Tibial artery (tissue), 4 donors: ENCODE measurements at regions of chr2 and their contacts with region 1.

Region 1: DNA sequence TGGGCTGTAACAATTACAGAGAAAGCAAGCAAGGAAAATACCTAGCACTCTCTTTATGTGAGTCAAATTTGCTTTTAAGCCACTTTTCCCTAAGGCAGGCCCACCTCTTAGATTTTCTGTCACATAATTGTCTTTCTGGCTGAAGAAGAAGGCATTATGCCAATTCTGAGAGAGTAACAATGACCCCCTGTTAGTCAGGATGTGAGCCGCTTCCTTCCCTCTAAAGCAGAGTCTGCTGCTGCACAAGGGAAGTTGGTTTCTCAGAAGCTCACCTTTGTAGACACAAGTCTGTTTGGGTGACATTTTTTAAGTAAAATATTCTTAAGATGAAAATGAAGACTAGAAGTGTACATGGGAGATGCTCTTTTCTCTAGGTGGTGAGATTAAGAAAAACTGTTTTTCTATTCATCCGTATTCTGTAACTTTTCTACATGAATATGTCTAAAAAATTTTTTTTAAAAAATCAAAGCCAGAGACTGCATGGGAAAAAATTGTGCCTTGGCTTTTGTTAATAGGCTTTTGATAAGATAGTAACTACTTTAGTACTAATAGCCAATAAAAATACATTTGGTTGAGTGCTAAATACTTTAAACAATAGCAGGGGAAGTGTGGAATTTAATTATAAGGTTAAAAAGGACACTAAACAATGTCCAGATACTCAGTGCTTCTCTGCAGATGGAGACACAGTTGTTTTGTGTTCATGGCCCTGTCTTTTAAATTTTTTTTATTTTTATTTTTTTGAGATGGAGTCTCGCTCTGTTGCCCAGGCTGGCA is 33.4 kb upstream of the VPS54 start:
- DNase-seq: no peak
- H3K4me3 ChIP-seq: no peak overlapping the region
- H3K27ac ChIP-seq: no peak overlapping the region
- H3K4me1 ChIP-seq: peaks cover 0 to 3% (median 2%) of the 10 kb centered on the region in 4 donors
- H3K27me3 ChIP-seq: no peaks in the 10 kb centered on the region
- CTCF ChIP-seq: no peak

Region 2: DNA sequence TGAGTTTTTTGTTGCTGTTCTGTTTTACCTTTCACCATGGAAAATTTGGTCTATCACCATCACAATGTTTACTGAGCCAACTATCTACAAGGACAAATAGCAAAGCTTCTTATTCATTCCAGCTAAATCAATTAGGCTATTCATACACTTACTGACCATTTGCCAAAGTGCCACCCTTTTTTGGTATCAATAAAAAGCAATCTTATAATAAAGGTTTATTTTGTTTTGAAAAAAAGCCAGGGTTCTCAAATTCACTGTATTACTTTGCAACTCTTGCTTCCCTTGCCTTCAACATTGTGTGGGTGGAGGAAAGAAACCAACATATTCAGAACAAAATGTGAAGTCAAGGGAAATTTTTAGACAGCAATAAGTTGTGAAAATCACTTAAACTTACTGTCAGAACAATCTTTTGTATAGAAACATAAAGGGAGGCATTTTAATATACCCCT is 76.3 kb after region 1 on chr2:
- intact Hi-C with region 1: no loop called
- DNase-seq: no peak
- H3K4me3 ChIP-seq: no peak overlapping the region
- H3K27ac ChIP-seq: no peak overlapping the region
- H3K4me1 ChIP-seq: peaks cover 0 to 55% (median 8%) of the 10 kb centered on the region in 4 donors
- H3K27me3 ChIP-seq: no peaks in the 10 kb centered on the region
- CTCF ChIP-seq: no peak

Region 3: GRCh38 chr2:64311948-64312621 is 259.4 kb after region 1 on chr2:
- intact Hi-C with region 1: loop called (anchors 5 kb)
- DNase-seq: peak; percentile 82 to 90
- H3K4me3 ChIP-seq: peak overlapping the region; percentile 23 to 29
- H3K27ac ChIP-seq: peak overlapping the region; percentile 70 to 74
- H3K4me1 ChIP-seq: peaks cover 0 to 24% (median 20%) of the 10 kb centered on the region in 4 donors
- H3K27me3 ChIP-seq: no peaks in the 10 kb centered on the region
- CTCF ChIP-seq: peak; percentile 41 to 54

Region 4: DNA sequence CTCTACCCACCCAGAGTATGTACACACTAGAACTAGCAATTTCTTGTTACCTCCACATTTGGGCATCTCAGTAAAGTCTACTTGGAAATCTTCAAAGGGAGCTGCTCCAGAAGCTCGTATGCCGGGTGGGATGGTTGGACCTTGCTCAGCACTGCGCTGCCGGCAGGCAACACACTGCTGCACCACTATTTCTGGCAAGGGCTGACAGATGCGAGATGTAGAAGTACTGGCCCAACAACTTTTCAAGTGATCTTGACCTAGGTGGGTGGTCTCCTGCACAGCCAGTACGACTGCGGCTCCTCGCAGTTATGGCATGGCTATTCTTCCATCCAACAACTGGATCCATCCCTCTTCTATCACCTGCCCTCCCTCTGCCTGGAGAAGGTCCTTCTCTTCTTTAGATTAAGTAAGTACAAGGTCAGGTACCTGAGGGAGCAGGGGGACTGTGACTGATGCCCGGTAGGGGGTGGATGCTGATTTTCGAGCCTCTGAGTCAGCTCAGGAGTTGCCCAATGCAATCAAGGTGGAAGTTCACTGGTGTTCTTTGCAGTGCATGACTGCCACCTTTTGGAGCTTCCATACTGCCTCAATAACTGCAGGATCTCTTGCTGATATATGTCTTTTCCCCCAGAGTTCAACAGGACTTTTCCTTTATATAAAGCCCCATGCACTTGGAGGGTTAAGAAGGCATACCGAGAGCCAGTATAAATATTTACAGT is 836.1 kb after region 1 on chr2:
- intact Hi-C with region 1: loop called (anchors 10 kb)
- DNase-seq: peak in 1 of 2 donors; percentile 45
- H3K4me3 ChIP-seq: no peak overlapping the region
- H3K27ac ChIP-seq: no peak overlapping the region
- H3K4me1 ChIP-seq: no peaks in the 10 kb centered on the region
- H3K27me3 ChIP-seq: peaks cover 0 to 11% of the 10 kb centered on the region in 2 donors
- CTCF ChIP-seq: peak; percentile 17 to 23